ENCODE measurements at regions of chr12 and their contacts with region 1.

Region 1: GRCh38 chr12:66087365-66087943 is 43.1 kb downstream of the LLPH start:
- DNase-seq: peak; percentile 35 to 68
- ATAC-seq: peak in 2 of 3 donors; percentile 55 to 73
- H3K4me3 ChIP-seq: no peak overlapping the region
- H3K4me3 Mint-ChIP-seq: no peak overlapping the region
- H3K27ac ChIP-seq: no peak overlapping the region
- H3K27ac Mint-ChIP-seq: no peak overlapping the region
- H3K4me1 ChIP-seq: no peaks in the 10 kb centered on the region
- H3K4me1 Mint-ChIP-seq: no peaks in the 10 kb centered on the region
- H3K27me3 ChIP-seq: no peaks in the 10 kb centered on the region
- H3K27me3 Mint-ChIP-seq: peaks cover 8 to 11% of the 10 kb centered on the region in 2 donors
- CTCF ChIP-seq: peak; percentile 71

Region 2: DNA sequence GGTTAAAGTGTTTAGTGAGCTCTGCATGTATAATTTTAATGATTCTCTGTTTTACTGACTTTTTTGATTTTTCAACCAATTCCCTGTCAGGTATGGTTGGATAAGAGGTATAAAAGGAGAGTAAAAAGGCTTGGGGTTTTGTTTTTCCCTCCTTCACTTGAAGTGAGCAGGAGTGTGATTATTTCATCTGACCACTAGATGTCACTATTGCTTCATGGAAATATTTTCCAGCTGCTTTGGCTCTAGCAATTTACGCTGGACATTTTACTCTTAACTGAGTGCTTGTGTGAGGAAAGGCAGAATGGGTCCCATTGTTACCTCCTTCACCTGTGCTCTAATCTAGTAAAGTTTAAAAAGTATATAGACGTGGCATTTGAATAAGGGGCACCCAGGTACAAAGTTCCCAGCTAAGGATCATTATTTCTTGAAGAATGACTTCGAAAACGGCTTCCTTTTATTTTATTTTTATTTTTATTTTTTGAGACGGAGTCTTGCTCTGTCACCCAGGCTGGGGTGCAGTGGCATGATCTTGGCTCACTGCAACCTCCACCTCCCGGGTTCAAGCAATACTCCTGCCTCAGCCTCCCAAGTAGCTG is 1196.5 kb before region 1 on chr12:
- intact Hi-C with region 1: loop called (anchors 5 kb)
- DNase-seq: peak in 1 of 2 donors; percentile 77
- ATAC-seq: peak; percentile 52 to 74 (median 71)
- H3K4me3 ChIP-seq: no peak overlapping the region
- H3K4me3 Mint-ChIP-seq: no peak overlapping the region
- H3K27ac ChIP-seq: no peak overlapping the region
- H3K27ac Mint-ChIP-seq: no peak overlapping the region
- H3K4me1 ChIP-seq: no peaks in the 10 kb centered on the region
- H3K4me1 Mint-ChIP-seq: peaks cover 5% of the 10 kb centered on the region in 2 donors
- H3K27me3 ChIP-seq: peaks cover 4% of the 10 kb centered on the region
- H3K27me3 Mint-ChIP-seq: peaks cover 15 to 21% of the 10 kb centered on the region in 2 donors
- CTCF ChIP-seq: peak; percentile 89

Region 3: GRCh38 chr12:65306366-65307168 is 780.9 kb before region 1 on chr12:
- intact Hi-C with region 1: loop called (anchors 2 kb)
- DNase-seq: peak in 1 of 2 donors; percentile 8
- ATAC-seq: peak in 1 of 3 donors; percentile 44
- H3K4me3 ChIP-seq: no peak overlapping the region
- H3K4me3 Mint-ChIP-seq: no peak overlapping the region
- H3K27ac ChIP-seq: no peak overlapping the region
- H3K27ac Mint-ChIP-seq: no peak overlapping the region
- H3K4me1 ChIP-seq: no peaks in the 10 kb centered on the region
- H3K4me1 Mint-ChIP-seq: no peaks in the 10 kb centered on the region
- H3K27me3 ChIP-seq: no peaks in the 10 kb centered on the region
- H3K27me3 Mint-ChIP-seq: peaks cover 13 to 41% of the 10 kb centered on the region in 2 donors
- CTCF ChIP-seq: no peak

Region 4: DNA sequence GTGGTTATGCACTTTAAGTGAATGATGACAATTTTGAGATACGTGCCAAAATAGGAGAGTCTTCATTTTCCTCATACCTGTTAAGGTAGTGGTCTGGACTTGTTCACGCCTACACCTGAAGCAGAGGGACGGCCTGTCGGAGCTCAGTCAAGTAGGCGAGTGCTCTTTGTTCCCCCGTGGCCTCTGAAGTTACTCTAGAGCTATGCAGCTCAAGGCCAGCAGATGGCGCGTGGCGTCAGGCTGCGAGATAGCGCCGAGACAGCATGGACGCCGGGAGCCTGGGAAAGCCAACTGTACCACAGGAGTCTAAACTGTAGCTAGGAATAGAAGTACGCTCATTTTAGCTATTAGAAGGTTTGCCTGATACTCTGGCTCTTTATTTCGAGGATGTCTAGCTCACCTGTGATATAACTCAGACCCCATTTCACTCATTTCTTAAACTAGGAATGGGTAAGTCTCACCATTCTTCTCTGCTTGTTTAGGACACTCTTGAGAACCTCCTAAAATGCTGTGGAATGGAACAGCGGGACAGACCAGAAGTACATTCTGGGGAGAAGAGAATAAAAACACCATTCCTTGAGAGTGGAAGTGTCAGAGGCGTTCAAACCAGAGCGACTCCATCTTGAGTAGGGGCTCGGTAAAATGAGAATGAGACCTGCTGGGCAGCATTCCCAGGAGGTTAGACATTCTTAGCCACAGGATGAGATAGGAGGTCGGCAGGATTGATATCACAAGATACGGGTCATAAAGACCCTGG is 530.6 kb before region 1 on chr12:
- intact Hi-C with region 1: loop called (anchors 1 kb)
- DNase-seq: peak; percentile 52 to 71
- ATAC-seq: peak; percentile 82 to 98 (median 85)
- H3K4me3 ChIP-seq: no peak overlapping the region
- H3K4me3 Mint-ChIP-seq: no peak overlapping the region
- H3K27ac ChIP-seq: no peak overlapping the region
- H3K27ac Mint-ChIP-seq: no peak overlapping the region
- H3K4me1 ChIP-seq: no peaks in the 10 kb centered on the region
- H3K4me1 Mint-ChIP-seq: peaks cover 0 to 7% of the 10 kb centered on the region in 2 donors
- H3K27me3 ChIP-seq: peaks cover 2% of the 10 kb centered on the region
- H3K27me3 Mint-ChIP-seq: peaks cover 5 to 21% of the 10 kb centered on the region in 2 donors
- CTCF ChIP-seq: peak; percentile 77

Region 5: GRCh38 chr12:65602610-65603295 is 484.7 kb before region 1 on chr12:
- intact Hi-C with region 1: loop called (anchors 5 kb)
- DNase-seq: peak; percentile 15 to 19
- ATAC-seq: peak in 1 of 3 donors; percentile 74
- H3K4me3 ChIP-seq: no peak overlapping the region
- H3K4me3 Mint-ChIP-seq: no peak overlapping the region
- H3K27ac ChIP-seq: no peak overlapping the region
- H3K27ac Mint-ChIP-seq: no peak overlapping the region
- H3K4me1 ChIP-seq: no peaks in the 10 kb centered on the region
- H3K4me1 Mint-ChIP-seq: no peaks in the 10 kb centered on the region
- H3K27me3 ChIP-seq: peaks cover 2% of the 10 kb centered on the region
- H3K27me3 Mint-ChIP-seq: peaks cover 18 to 24% of the 10 kb centered on the region in 2 donors
- CTCF ChIP-seq: peak; percentile 27